Esophagus muscularis mucosa (tissue), 4 donors: ENCODE measurements at regions of chr2 and their contacts with region 1.

Region 1: GRCh38 chr2:19362755-19363473 is 4.5 kb upstream of the OSR1 start:
- DNase-seq: peak; percentile 93
- H3K4me3 ChIP-seq: peak overlapping the region; percentile 52 to 74 (median 68)
- H3K27ac ChIP-seq: peak overlapping the region; percentile 87 to 94 (median 91)
- H3K4me1 ChIP-seq: peaks cover 14 to 53% (median 43%) of the 10 kb centered on the region in 4 donors
- H3K27me3 ChIP-seq: peaks cover 0 to 6% (median 0%) of the 10 kb centered on the region in 4 donors
- CTCF ChIP-seq: peak; percentile 79 to 84 (median 81)
- EP300 ChIP-seq: no peak
- POLR2A ChIP-seq: no peak

Region 2: GRCh38 chr2:18435421-18436037 is 927.4 kb before region 1 on chr2:
- intact Hi-C with region 1: loop called (anchors 5 kb)
- DNase-seq: no peak
- H3K4me3 ChIP-seq: no peak overlapping the region
- H3K27ac ChIP-seq: peak overlapping the region; percentile 11 to 47 (median 32)
- H3K4me1 ChIP-seq: peaks cover 0 to 55% (median 50%) of the 10 kb centered on the region in 4 donors
- H3K27me3 ChIP-seq: no peaks in the 10 kb centered on the region
- CTCF ChIP-seq: peak; percentile 57 to 63 (median 61)
- EP300 ChIP-seq: no peak
- POLR2A ChIP-seq: no peak

Region 3: GRCh38 chr2:18749912-18750526 is 612.9 kb before region 1 on chr2:
- intact Hi-C with region 1: loop called (anchors 2 kb)
- DNase-seq: no peak
- H3K4me3 ChIP-seq: no peak overlapping the region
- H3K27ac ChIP-seq: peak overlapping the region in 2 of 4 donors; percentile 54 to 64
- H3K4me1 ChIP-seq: peaks cover 0 to 48% (median 30%) of the 10 kb centered on the region in 4 donors
- H3K27me3 ChIP-seq: no peaks in the 10 kb centered on the region
- CTCF ChIP-seq: peak; percentile 78 to 86 (median 81)
- EP300 ChIP-seq: no peak
- POLR2A ChIP-seq: no peak

Region 4: GRCh38 chr2:18883616-18884456 is 479.1 kb before region 1 on chr2:
- intact Hi-C with region 1: loop called (anchors 10 kb)
- DNase-seq: no peak
- H3K4me3 ChIP-seq: no peak overlapping the region
- H3K27ac ChIP-seq: no peak overlapping the region
- H3K4me1 ChIP-seq: peaks cover 0 to 5% (median 0%) of the 10 kb centered on the region in 4 donors
- H3K27me3 ChIP-seq: no peaks in the 10 kb centered on the region
- CTCF ChIP-seq: peak in 1 of 3 experiments; percentile 46
- EP300 ChIP-seq: no peak
- POLR2A ChIP-seq: no peak

Region 5: GRCh38 chr2:18987592-18988073 is 375.3 kb before region 1 on chr2:
- intact Hi-C with region 1: loop called (anchors 5 kb)
- DNase-seq: peak; percentile 94
- H3K4me3 ChIP-seq: no peak overlapping the region
- H3K27ac ChIP-seq: peak overlapping the region; percentile 11 to 42 (median 36)
- H3K4me1 ChIP-seq: peaks cover 16 to 43% (median 36%) of the 10 kb centered on the region in 4 donors
- H3K27me3 ChIP-seq: no peaks in the 10 kb centered on the region
- CTCF ChIP-seq: peak; percentile 36 to 50 (median 43)
- EP300 ChIP-seq: no peak
- POLR2A ChIP-seq: no peak

Region 6: GRCh38 chr2:19272039-19272438 is 90.9 kb before region 1 on chr2:
- intact Hi-C with region 1: no loop called
- DNase-seq: no peak
- H3K4me3 ChIP-seq: no peak overlapping the region
- H3K27ac ChIP-seq: no peak overlapping the region
- H3K4me1 ChIP-seq: no peaks in the 10 kb centered on the region
- H3K27me3 ChIP-seq: no peaks in the 10 kb centered on the region
- CTCF ChIP-seq: no peak
- EP300 ChIP-seq: no peak
- POLR2A ChIP-seq: no peak

Region 7: DNA sequence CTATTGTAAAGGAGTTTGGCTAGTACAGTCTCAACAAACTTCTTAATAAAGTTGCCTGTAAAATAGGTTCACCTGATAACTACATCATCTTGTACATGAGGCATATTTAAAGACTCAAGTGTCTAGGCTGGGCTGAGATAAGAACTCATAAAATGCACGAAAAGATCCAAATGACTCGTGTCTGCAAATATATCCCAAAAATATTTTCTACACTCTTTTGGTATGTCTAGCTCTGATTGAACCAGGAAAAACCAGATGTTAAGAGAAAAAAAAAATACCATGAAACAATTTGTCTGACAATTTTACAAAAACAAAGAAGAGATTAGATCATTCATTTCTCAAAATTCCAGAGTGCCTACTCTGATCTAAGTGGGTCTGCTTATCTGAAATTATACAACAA is 162.4 kb after region 1 on chr2:
- intact Hi-C with region 1: no loop called
- DNase-seq: no peak
- H3K4me3 ChIP-seq: no peak overlapping the region
- H3K27ac ChIP-seq: no peak overlapping the region
- H3K4me1 ChIP-seq: no peaks in the 10 kb centered on the region
- H3K27me3 ChIP-seq: no peaks in the 10 kb centered on the region
- CTCF ChIP-seq: no peak
- EP300 ChIP-seq: no peak
- POLR2A ChIP-seq: no peak